CD4-positive, alpha-beta memory T cell (primary cell): ENCODE measurements at regions of chr20 and their contacts with region 1.

Region 1: DNA sequence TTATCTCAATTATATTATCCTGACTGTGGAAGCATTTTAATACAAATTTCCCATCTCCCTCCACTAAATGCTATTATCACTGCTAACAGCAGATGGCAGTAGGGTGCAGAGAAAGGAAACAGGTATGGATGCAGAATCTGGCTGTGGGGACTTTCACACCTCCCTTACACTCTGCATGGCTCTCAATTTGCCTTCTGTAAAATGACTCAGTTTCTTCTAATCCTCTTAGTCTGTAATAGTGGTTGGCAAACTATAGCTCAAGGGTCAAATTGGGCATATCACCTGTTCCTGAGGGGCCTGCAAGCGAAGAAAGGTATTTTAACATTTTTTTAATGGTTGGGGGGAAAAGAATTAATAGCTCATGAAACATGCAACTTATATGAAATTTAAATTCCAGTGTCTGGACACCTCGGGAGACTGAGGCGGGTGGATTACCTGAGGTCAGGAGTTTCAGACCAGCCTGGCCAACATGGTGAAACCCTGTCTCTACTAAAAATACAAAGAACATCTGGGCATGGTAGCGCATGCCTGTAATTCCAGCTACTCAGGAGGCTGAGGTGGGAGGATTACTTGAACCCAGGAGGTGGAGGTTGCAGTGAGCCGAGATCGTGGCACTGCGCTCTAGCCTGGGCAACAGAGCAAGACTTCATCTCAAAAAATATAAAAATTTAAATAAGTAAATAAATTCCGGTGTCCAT is 83.5 kb downstream of the ZMYND8 start:
- DNase-seq: peak; percentile 58 to 70 (median 63)
- H3K4me3 ChIP-seq: no peak overlapping the region
- H3K4me3 Mint-ChIP-seq: no peak overlapping the region
- H3K27ac ChIP-seq: no peak overlapping the region
- H3K27ac Mint-ChIP-seq: peak overlapping the region in 2 of 7 donors; percentile 33 to 51
- H3K4me1 ChIP-seq: no peaks in the 10 kb centered on the region
- H3K4me1 Mint-ChIP-seq: peaks cover 7 to 18% (median 13%) of the 10 kb centered on the region in 4 donors
- H3K27me3 ChIP-seq: no peaks in the 10 kb centered on the region
- H3K27me3 Mint-ChIP-seq: no peaks in the 10 kb centered on the region

Region 2: DNA sequence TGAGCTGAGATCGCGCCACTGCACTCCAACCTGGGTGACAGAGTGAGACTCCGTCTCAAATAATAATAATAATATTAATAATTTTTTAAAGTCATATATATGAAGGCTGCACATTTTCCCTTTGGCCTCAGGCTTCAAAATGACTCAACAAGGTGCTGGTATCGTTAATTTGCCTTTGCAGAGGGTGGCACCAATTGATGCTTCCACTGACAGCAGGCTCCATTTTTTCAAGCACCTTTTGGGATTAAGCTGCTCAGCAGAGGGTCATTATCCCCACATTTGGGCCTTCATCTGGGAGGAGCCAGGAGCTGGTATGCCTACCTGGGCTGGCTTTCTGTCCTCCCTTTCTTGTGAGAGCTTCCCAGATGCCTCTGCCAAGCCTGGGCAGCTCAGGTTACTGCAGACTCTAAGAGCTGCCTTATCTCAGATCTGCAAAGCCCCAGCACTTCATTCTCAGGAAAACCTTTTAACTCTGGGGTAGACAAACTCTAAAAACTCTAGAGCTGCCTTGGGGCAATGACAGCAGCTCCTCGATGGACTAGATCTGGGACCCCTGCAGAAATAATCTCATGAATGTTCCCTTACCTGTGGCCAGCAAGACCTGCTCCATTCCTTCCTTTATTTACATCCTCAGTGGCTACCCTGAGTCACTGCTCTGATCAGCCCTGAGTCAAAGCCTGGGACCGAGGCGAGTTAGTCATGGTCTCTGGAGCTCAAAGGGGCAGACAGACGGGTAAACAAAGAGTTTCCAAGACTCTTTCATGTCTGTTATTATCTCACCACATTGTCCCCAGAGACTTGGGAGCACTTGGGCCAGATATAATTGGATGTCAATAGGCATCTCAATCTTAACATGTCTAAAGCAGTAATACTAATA is 458.4 kb before region 1 on chr20:
- CTCF ChIA-PET with region 1: no interaction called
- POLR2A ChIA-PET with region 1: no interaction called
- intact Hi-C with region 1: no loop called
- DNase-seq: no peak
- H3K4me3 ChIP-seq: no peak overlapping the region
- H3K4me3 Mint-ChIP-seq: no peak overlapping the region
- H3K27ac ChIP-seq: no peak overlapping the region
- H3K27ac Mint-ChIP-seq: no peak overlapping the region
- H3K4me1 ChIP-seq: no peaks in the 10 kb centered on the region
- H3K4me1 Mint-ChIP-seq: peaks cover 0 to 2% (median 0%) of the 10 kb centered on the region in 4 donors
- H3K27me3 ChIP-seq: no peaks in the 10 kb centered on the region
- H3K27me3 Mint-ChIP-seq: peaks cover 15 to 30% of the 10 kb centered on the region in 2 donors

Region 3: DNA sequence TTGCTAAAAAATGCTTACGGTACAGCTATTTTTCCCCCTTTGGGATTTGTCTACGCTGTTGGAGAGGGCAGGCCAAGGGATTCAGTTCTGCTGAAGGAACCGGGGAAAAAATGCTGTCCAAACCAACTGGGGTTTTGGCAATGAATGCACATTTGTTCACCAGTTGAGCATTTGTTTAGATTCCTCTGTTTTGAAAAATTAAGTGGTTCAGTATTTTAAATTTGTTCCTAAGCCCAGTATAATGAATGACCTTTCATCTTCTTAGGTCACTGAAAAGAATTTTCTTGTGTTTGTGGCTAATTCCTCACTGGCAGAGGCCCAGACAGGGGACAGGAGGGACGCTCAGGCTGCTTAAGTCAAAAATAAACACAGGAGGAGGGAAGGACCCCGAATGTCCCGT is 389.1 kb before region 1 on chr20:
- CTCF ChIA-PET with region 1: no interaction called
- POLR2A ChIA-PET with region 1: no interaction called
- intact Hi-C with region 1: no loop called
- DNase-seq: no peak
- H3K4me3 ChIP-seq: no peak overlapping the region
- H3K4me3 Mint-ChIP-seq: no peak overlapping the region
- H3K27ac ChIP-seq: no peak overlapping the region
- H3K27ac Mint-ChIP-seq: no peak overlapping the region
- H3K4me1 ChIP-seq: no peaks in the 10 kb centered on the region
- H3K4me1 Mint-ChIP-seq: no peaks in the 10 kb centered on the region
- H3K27me3 ChIP-seq: no peaks in the 10 kb centered on the region
- H3K27me3 Mint-ChIP-seq: peaks cover 14 to 29% of the 10 kb centered on the region in 2 donors

Region 4: GRCh38 chr20:47258745-47259695 is 14.0 kb before region 1 on chr20:
- CTCF ChIA-PET with region 1: interaction called, 11 read pairs
- POLR2A ChIA-PET with region 1: interaction called, 6 read pairs
- intact Hi-C with region 1: no loop called
- DNase-seq: no peak
- H3K4me3 ChIP-seq: no peak overlapping the region
- H3K4me3 Mint-ChIP-seq: no peak overlapping the region
- H3K27ac ChIP-seq: no peak overlapping the region
- H3K27ac Mint-ChIP-seq: peak overlapping the region in 6 of 7 donors; percentile 28 to 89 (median 56)
- H3K4me1 ChIP-seq: no peaks in the 10 kb centered on the region
- H3K4me1 Mint-ChIP-seq: peaks cover 5 to 20% (median 11%) of the 10 kb centered on the region in 4 donors
- H3K27me3 ChIP-seq: no peaks in the 10 kb centered on the region
- H3K27me3 Mint-ChIP-seq: no peaks in the 10 kb centered on the region

Region 5: DNA sequence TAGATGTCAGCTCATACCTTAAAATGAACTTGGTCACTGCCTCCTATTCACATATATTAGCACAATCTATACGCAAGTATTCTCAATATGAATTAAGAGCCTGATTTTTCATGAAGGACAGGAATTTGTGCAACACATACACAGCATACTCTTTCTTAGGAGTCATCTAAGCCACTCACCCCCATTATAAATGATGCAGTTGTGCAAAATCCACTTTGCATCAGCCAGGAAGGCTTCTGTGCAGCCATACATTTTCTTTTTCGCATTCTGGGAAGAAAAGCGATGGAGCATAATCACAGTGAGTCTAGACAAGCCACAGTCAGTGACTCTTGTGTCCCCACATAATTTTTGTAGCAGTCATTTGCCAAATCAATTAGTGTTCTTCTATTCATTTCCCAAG is 17.0 kb after region 1 on chr20:
- CTCF ChIA-PET with region 1: interaction called, 33 read pairs
- POLR2A ChIA-PET with region 1: no interaction called
- intact Hi-C with region 1: no loop called
- DNase-seq: no peak
- H3K4me3 ChIP-seq: no peak overlapping the region
- H3K4me3 Mint-ChIP-seq: no peak overlapping the region
- H3K27ac ChIP-seq: no peak overlapping the region
- H3K27ac Mint-ChIP-seq: no peak overlapping the region
- H3K4me1 ChIP-seq: no peaks in the 10 kb centered on the region
- H3K4me1 Mint-ChIP-seq: peaks cover 0 to 2% (median 0%) of the 10 kb centered on the region in 4 donors
- H3K27me3 ChIP-seq: no peaks in the 10 kb centered on the region
- H3K27me3 Mint-ChIP-seq: no peaks in the 10 kb centered on the region

Region 6: DNA sequence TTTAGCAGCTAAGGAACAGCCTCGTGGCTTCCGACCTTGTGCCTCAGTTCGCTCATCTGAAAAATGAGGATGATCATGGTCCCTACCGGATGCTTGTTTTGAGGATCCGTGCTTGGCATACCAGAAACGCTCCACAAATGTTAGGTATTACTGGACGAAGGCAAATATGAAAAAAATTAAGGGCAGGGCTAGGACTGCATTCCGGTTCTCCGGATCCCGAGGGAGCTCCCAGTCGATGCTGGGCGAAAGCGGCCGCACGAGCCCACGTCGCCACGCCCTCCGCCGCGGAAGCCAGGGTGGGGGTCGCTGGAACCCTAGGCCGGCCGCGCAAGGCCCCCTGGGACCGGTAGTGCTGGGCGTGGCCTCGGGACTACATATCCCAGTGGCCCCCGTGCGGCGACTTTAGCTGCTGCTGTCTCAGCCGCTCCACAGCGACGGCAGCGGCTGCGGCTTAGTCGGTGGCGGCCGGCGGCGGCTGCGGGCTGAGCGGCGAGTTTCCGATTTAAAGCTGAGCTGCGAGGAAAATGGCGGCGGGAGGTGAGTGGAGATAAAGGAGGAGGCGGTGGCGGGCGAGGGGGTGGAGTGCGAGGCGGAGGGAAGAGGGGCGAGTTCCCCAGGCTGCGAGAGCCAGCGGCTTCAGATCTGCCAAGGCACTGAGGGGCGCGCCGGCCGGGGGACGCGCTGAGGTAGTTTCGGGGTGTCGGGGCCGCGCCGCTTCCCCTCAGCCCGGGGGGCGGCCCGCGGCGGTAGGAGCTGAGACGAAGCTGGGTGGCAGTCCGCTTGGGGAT is 228.6 kb after region 1 on chr20 and contains the start of gene NCOA3:
- CTCF ChIA-PET with region 1: interaction called, 6 read pairs
- POLR2A ChIA-PET with region 1: no interaction called
- intact Hi-C with region 1: loop called (anchors 5 kb)
- DNase-seq: peak; percentile 83 to 90 (median 86)
- H3K4me3 ChIP-seq: peak within 1 kb of the TSS; percentile 68 to 70
- H3K4me3 Mint-ChIP-seq: peak within 1 kb of the TSS; percentile 90 to 99 (median 96)
- H3K27ac ChIP-seq: peak within 1 kb of the TSS; percentile 75
- H3K27ac Mint-ChIP-seq: peak within 1 kb of the TSS; percentile 91 to 97 (median 95)
- H3K4me1 ChIP-seq: peaks cover 39% of the 10 kb centered on the region
- H3K4me1 Mint-ChIP-seq: peaks cover 28 to 57% (median 39%) of the 10 kb centered on the region in 4 donors
- H3K27me3 ChIP-seq: no peaks in the 10 kb centered on the region
- H3K27me3 Mint-ChIP-seq: no peaks in the 10 kb centered on the region
- total RNA-seq, gene NCOA3: 69.0 to 74.7 TPM

Region 7: DNA sequence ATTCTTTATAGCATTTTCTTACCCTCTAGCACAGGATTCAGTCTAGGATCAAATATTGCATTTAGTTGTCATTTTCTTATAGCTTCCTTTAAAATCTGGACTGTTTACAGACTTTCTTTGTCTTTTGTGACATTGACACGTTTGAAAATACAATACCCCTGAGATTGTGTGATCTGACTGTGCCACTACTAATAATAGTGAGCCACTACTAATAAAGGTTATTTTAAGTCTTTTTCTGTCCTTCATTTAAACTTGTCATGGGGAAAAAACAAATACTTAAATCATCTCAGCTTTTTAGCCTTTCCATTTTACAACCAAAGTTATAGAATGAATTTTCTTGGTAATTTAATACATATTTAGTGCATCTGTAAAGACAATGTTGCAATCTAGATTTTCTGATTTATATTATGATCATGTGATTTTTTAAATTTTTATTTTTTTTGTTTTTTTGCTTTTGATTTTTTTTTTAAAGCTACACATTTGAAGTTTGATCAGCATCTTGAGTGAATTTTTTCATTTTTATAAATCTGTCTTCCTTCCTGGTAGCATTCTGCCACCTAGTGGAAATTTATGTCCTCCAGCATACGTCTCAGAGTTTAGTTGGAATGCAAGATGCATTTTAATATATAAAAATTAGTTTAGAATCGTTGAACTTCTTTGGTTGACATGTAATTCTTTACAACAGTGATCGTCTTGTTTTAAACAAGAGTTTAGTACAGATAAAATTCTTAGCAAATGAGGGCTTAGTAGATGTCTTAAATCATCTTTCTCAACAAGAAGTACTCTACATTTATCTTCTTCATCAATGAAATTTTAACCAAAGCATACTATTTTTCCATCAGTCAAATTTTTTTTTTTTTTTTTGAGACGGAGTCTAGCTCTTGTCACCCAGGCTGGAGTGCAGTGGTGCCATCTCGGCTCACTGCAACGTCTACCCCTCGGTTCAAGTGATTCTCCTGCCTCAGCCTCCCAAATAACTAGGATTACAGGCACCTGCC is 348.1 kb after region 1 on chr20:
- CTCF ChIA-PET with region 1: interaction called, 84 read pairs
- POLR2A ChIA-PET with region 1: no interaction called
- intact Hi-C with region 1: loop called (anchors 1 kb)
- DNase-seq: peak; percentile 39 to 54 (median 46)
- H3K4me3 ChIP-seq: no peak overlapping the region
- H3K4me3 Mint-ChIP-seq: no peak overlapping the region
- H3K27ac ChIP-seq: no peak overlapping the region
- H3K27ac Mint-ChIP-seq: peak overlapping the region in 2 of 7 donors; percentile 15 to 30
- H3K4me1 ChIP-seq: no peaks in the 10 kb centered on the region
- H3K4me1 Mint-ChIP-seq: peaks cover 8 to 20% (median 12%) of the 10 kb centered on the region in 4 donors
- H3K27me3 ChIP-seq: no peaks in the 10 kb centered on the region
- H3K27me3 Mint-ChIP-seq: no peaks in the 10 kb centered on the region